Left cardiac atrium (tissue), 4 donors: ENCODE measurements at regions of chr21 and their contacts with region 1.

Region 1: GRCh38 chr21:15894596-15894995 is 164.8 kb downstream of the USP25 start:
- DNase-seq: no peak
- ATAC-seq: no peak

Region 2: GRCh38 chr21:15140321-15141019 is 754.1 kb before region 1 on chr21:
- intact Hi-C with region 1: no loop called
- DNase-seq: peak; percentile 30
- ATAC-seq: peak in 1 of 2 donors; percentile 91

Region 3: DNA sequence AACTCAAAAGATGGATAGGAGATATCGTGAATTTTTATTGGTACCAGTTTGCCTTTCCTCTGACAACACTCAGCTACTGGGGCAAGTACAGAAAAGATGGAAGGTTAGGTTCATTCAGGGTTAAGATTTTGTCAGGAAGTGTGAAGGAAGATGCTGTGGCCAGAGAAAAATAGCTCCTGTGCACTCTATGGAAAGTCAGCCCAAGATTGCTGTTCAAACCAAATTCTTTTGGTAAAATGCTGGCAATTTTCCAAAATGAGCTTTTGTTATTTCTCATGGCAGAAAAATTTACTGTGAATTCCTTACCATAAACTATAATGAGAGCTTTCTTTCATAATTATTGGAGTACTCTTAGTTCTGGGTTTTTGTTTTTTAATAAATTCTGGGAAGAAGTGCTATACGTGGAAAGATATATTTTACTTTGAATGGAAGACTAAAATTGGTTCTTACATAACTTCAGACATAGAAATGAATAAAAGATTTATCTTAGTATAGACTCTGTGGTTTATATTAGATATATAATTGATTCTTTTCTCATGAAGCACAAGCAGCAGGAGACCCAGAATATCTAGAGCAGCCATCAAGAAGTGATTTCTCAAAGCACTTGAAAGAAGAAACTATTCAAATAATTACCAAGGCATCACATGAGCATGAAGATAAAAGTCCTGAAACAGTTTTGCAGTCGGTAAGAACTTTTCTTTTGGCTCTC is 52.6 kb before region 1 on chr21:
- intact Hi-C with region 1: no loop called
- DNase-seq: no peak
- ATAC-seq: no peak

Region 4: DNA sequence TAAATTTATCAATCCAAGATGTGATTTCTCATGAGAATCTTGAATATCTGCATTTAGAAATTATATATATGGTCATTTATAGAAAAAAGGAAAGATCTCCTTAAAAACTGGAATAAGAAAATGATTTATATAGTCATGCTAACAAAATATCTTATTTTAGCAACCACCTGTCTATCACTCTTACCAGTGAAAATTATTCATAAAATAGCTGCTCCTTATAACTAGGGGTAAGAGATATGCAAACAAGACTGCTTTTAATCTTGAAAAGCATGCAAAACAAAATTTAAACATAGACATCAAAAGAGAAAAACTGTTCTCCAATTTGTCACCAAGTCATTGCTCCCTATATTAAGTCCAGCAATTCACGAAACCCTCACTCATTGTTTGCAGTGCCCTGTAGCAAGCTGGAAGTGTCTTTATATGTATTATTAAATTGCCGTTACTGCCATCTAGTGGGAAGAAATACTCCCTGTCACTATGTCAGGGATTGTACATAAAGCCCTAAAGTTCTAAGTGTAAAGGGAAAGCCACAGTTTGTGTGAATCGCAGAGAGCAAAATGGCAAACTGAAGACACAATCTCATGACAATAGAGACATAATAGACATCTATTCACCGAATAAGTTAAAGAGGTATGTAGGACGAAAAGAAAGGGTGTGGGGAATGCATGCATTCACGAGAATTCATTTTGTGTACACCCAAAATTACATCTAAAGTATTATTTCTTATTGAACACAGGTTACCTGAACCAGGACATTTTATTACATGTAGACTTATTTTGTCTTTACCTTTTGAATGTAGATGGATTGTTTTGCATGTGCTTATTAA is 435.7 kb after region 1 on chr21:
- intact Hi-C with region 1: loop called in 1 of 2 experiments (anchors 10 kb)
- DNase-seq: no peak
- ATAC-seq: peak; percentile 96 to 98